Mammary epithelial cell (primary cell): ENCODE measurements at regions of chr10 and their contacts with region 1.

Region 1: DNA sequence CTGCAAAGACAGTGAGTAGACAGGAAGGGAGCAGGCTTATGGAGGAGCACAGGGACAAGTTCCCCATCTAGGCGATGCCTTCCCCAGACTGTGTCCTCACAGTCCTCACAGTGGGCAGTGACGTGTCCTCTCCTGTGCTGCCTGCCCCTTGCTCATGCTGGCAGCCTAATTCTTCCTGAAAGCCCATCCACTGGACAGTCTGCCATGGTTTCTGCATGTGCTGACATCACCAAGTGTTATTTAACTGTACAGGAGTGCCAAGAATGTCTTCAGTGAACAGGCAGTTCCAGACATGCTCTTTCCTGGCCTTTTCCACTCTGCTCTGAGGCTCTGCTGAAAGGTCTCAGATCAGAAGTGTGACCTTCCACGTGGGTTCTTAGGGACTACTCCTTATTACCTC is 54.1 kb downstream of the ZNF248 start:
- DNase-seq: peak; percentile 18
- H3K4me3 ChIP-seq: no peak overlapping the region
- H3K27ac ChIP-seq: no peak overlapping the region
- H3K4me1 ChIP-seq: no peaks in the 10 kb centered on the region
- H3K27me3 ChIP-seq: no peaks in the 10 kb centered on the region
- CTCF ChIP-seq: no peak

Region 2: GRCh38 chr10:37734976-37735375 is 68.3 kb before region 1 on chr10:
- CTCF ChIA-PET with region 1: no interaction called
- dilution Hi-C with region 1: no loop called
- in situ Hi-C with region 1: no loop called
- intact Hi-C with region 1: loop called (anchors 10 kb)
- DNase-seq: peak; percentile 23
- H3K4me3 ChIP-seq: no peak overlapping the region
- H3K27ac ChIP-seq: no peak overlapping the region
- H3K4me1 ChIP-seq: no peaks in the 10 kb centered on the region
- H3K27me3 ChIP-seq: no peaks in the 10 kb centered on the region
- CTCF ChIP-seq: no peak